ENCODE measurements at regions of chr10 and their contacts with region 1.

Region 1: DNA sequence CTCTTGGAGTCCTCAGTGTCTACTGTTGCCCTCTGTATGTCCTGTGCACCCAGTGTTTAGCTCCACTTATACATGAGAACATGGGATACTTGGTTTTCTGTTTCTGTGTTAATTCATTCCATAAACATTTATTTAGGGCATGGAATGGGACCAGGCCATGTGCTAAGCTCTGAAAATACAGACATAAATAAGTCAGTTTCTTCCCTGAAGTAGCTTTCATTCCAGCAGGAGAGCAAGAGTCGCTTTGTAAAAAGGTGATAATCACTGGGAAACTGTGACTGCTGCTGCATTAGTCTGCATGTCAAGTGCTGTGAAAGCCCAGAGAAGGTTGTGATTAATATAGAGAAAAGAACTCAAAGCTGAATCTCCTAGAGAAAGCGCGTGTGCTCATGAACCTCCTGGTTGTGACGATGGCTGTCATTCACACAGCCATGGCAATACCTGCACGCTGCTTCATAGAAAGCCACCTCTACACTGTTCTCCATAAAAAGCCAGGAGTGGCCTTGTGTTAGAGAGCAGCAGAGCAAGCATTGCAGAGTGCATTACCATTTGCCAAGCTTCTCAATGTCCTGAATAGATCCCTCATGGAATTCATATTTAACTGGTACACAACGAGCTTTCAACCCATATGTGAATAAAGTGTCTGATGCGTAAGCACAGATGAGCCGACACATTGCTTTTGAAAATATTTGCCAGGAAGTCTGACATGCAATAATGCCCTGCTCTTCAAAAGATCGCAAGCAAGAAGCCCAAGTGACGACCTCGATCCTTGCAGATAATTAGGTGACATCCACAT is 30.6 kb upstream of the PITRM1 start:
- DNase-seq: no peak
- H3K4me3 ChIP-seq: no peak overlapping the region
- H3K27ac ChIP-seq: no peak overlapping the region
- H3K4me1 ChIP-seq: no peaks in the 10 kb centered on the region
- H3K27me3 ChIP-seq: peaks cover 12% of the 10 kb centered on the region
- CTCF ChIP-seq: no peak

Region 2: DNA sequence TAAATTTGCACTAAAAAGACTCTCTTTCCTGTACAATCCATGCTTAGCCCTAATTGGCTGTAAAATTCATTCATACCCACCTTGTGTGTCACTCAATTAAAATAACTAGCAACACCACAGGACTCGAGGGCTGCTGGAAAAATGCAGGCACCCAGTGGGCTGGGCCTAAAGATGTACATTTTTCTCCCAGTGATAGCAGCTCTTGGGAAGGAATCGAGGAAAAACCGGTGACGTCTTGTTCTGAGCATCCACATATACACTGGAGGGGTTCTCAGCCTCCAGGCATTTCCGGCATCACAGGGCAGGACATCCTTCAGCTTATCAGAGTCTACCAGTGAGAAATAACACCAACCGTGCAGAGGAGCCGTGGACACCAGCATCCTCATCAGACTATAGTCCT is 55.2 kb after region 1 on chr10:
- CTCF ChIA-PET with region 1: no interaction called
- dilution Hi-C with region 1: loop called (anchors 5 kb)
- in situ Hi-C with region 1: no loop called
- intact Hi-C with region 1: no loop called
- DNase-seq: no peak
- H3K4me3 ChIP-seq: no peak overlapping the region
- H3K27ac ChIP-seq: no peak overlapping the region
- H3K4me1 ChIP-seq: no peaks in the 10 kb centered on the region
- H3K27me3 ChIP-seq: peaks cover 7% of the 10 kb centered on the region
- CTCF ChIP-seq: no peak

Measured in mammary epithelial cell (primary cell).